CD4-positive, alpha-beta memory T cell (primary cell): ENCODE measurements at regions of chr13 and their contacts with region 1.

Region 1: GRCh38 chr13:26482451-26483197 is 74.9 kb upstream of the WASF3 start:
- DNase-seq: peak; percentile 70 to 85 (median 77)
- H3K4me3 ChIP-seq: no peak overlapping the region
- H3K4me3 Mint-ChIP-seq: peak overlapping the region; percentile 21 to 66 (median 61)
- H3K27ac ChIP-seq: no peak overlapping the region
- H3K27ac Mint-ChIP-seq: peak overlapping the region; percentile 57 to 88 (median 83)
- H3K4me1 ChIP-seq: peaks cover 22% of the 10 kb centered on the region
- H3K4me1 Mint-ChIP-seq: peaks cover 4 to 23% (median 12%) of the 10 kb centered on the region in 4 donors
- H3K27me3 ChIP-seq: no peaks in the 10 kb centered on the region
- H3K27me3 Mint-ChIP-seq: no peaks in the 10 kb centered on the region

Region 2: GRCh38 chr13:26253787-26254582 is 228.6 kb before region 1 on chr13 and contains the start of gene CDK8:
- CTCF ChIA-PET with region 1: interaction called, 3 read pairs
- POLR2A ChIA-PET with region 1: no interaction called
- intact Hi-C with region 1: loop called (anchors 10 kb)
- DNase-seq: peak; percentile 91 to 95 (median 92)
- H3K4me3 ChIP-seq: peak within 1 kb of the TSS; percentile 55 to 87
- H3K4me3 Mint-ChIP-seq: peak within 1 kb of the TSS; percentile 91 to 100 (median 94)
- H3K27ac ChIP-seq: peak within 1 kb of the TSS; percentile 58
- H3K27ac Mint-ChIP-seq: peak within 1 kb of the TSS; percentile 86 to 99 (median 93)
- H3K4me1 ChIP-seq: peaks cover 18% of the 10 kb centered on the region
- H3K4me1 Mint-ChIP-seq: peaks cover 29 to 44% (median 30%) of the 10 kb centered on the region in 4 donors
- H3K27me3 ChIP-seq: no peaks in the 10 kb centered on the region
- H3K27me3 Mint-ChIP-seq: peaks cover 0 to 1% of the 10 kb centered on the region in 2 donors
- total RNA-seq, gene CDK8: 10.4 to 11.7 TPM

Region 3: GRCh38 chr13:26495750-26496149 is 13.1 kb after region 1 on chr13:
- CTCF ChIA-PET with region 1: interaction called, 53 read pairs
- POLR2A ChIA-PET with region 1: no interaction called
- intact Hi-C with region 1: loop called (anchors 1 kb)
- DNase-seq: no peak
- H3K4me3 ChIP-seq: no peak overlapping the region
- H3K4me3 Mint-ChIP-seq: no peak overlapping the region
- H3K27ac ChIP-seq: no peak overlapping the region
- H3K27ac Mint-ChIP-seq: peak overlapping the region in 1 of 7 donors; percentile 53
- H3K4me1 ChIP-seq: no peaks in the 10 kb centered on the region
- H3K4me1 Mint-ChIP-seq: no peaks in the 10 kb centered on the region
- H3K27me3 ChIP-seq: no peaks in the 10 kb centered on the region
- H3K27me3 Mint-ChIP-seq: peaks cover 9 to 12% of the 10 kb centered on the region in 2 donors

Region 4: DNA sequence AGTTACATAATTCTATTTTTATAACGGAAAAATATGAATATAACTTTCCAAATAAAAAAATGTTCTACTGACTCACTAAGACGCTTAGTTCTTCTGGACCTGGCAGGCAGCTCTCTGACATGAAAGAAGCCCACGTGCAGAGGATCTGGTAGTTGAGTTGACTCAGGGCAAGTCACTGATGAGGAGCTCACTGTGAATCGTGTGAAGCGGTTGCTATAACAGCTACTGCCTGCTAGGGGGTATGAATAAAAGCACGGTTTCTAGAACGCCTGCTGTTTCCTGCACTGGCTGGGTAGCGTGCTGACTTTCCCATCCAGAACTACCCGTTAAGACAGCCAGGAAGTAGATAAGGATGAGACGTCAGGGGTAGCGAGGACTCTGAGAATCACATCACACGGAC is 20.2 kb after region 1 on chr13:
- CTCF ChIA-PET with region 1: interaction called, 53 read pairs
- POLR2A ChIA-PET with region 1: no interaction called
- intact Hi-C with region 1: no loop called
- DNase-seq: no peak
- H3K4me3 ChIP-seq: no peak overlapping the region
- H3K4me3 Mint-ChIP-seq: peak overlapping the region in 2 of 8 donors; percentile 37 to 60
- H3K27ac ChIP-seq: no peak overlapping the region
- H3K27ac Mint-ChIP-seq: no peak overlapping the region
- H3K4me1 ChIP-seq: no peaks in the 10 kb centered on the region
- H3K4me1 Mint-ChIP-seq: peaks cover 0 to 5% (median 2%) of the 10 kb centered on the region in 4 donors
- H3K27me3 ChIP-seq: no peaks in the 10 kb centered on the region
- H3K27me3 Mint-ChIP-seq: peaks cover 3 to 6% of the 10 kb centered on the region in 2 donors

Region 5: DNA sequence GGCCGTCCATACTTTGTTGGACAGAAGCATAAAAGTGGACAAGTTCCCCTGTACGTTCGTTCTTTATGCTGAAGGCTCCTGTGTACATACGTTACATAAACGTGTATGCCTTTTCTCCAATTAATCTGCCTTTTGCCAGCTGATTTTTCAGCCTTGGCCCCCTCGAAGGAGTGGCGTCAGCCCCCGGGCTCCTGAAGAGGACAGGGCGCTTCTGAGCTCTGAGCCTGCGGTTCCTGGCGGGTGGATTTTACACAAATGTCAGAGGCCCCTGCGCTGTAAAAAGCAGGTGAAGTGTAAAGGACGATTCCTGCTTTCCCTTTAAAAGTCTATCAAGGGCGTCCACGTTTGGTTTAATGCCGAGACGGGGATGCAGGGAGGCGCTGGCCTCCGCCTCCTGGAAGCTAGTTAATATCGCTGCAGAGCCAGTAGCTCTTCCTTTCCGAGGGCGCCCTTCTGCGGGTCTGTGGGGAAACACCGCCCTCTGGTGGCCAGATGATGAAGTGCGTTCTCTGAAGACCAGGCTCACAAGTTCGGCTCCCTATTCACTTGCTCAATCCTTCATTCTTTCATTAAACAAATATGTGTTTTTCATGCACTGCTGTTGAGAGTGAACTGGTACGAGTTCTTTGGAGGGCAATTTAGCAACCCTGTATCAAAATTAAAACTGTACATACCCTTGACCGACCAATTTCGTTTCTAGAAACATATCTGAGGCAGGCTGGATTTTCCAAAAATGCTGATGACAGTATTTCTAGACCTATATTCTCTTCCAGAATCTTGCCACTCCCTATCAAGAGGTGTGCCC is 216.0 kb after region 1 on chr13:
- CTCF ChIA-PET with region 1: interaction called, 6 read pairs
- POLR2A ChIA-PET with region 1: no interaction called
- intact Hi-C with region 1: loop called (anchors 1 kb)
- DNase-seq: peak; percentile 66 to 74 (median 72)
- H3K4me3 ChIP-seq: no peak overlapping the region
- H3K4me3 Mint-ChIP-seq: peak overlapping the region in 2 of 8 donors; percentile 12 to 43
- H3K27ac ChIP-seq: no peak overlapping the region
- H3K27ac Mint-ChIP-seq: peak overlapping the region in 1 of 7 donors; percentile 11
- H3K4me1 ChIP-seq: peaks cover 4% of the 10 kb centered on the region
- H3K4me1 Mint-ChIP-seq: peaks cover 0 to 3% (median under 1%) of the 10 kb centered on the region in 4 donors
- H3K27me3 ChIP-seq: no peaks in the 10 kb centered on the region
- H3K27me3 Mint-ChIP-seq: peaks cover 3 to 6% of the 10 kb centered on the region in 2 donors

Region 6: GRCh38 chr13:26929971-26930730 is 447.5 kb after region 1 on chr13:
- CTCF ChIA-PET with region 1: no interaction called
- POLR2A ChIA-PET with region 1: no interaction called
- intact Hi-C with region 1: loop called (anchors 10 kb)
- DNase-seq: peak in 4 of 5 donors; percentile 48 to 57 (median 52)
- H3K4me3 ChIP-seq: no peak overlapping the region
- H3K4me3 Mint-ChIP-seq: no peak overlapping the region
- H3K27ac ChIP-seq: no peak overlapping the region
- H3K27ac Mint-ChIP-seq: no peak overlapping the region
- H3K4me1 ChIP-seq: no peaks in the 10 kb centered on the region
- H3K4me1 Mint-ChIP-seq: peaks cover 0 to 3% (median 0%) of the 10 kb centered on the region in 4 donors
- H3K27me3 ChIP-seq: no peaks in the 10 kb centered on the region
- H3K27me3 Mint-ChIP-seq: peaks cover 4% of the 10 kb centered on the region in 2 donors